GM10248 (cell line): ENCODE measurements at regions of chr15 and their contacts with region 1.

Region 1: DNA sequence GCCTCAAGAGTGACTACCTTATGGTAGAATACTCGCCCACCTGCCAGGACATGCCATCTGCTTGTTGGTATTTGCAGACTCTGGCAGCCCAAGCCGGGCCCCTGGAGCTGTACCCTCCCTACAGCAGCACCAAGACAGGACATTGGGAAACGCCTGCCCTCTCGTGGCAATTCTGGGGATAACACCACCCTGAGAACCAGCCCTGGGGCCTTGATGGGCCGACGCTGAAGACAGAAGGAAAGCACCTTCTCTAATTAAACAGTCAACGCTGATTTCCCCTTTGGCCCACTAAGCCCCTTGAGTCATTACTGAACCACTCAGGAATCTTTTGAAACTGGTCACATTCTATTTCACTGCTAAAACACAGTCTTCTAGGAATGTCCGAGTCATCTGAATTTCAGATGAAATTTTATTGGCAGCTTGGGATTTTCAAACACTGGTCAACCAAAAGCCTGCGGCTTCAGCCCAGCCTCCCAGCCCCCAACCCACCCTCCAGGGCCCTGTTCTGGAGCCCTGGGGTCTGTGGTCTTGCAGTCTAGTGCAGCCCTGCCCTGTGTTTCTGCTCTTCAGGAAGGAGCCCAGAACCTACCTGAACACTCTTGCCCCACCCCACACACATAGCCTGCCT is 91.3 kb downstream of the TMEM266 start:
- DNase-seq: peak; percentile 86
- CTCF ChIP-seq: peak; percentile 88

Region 2: DNA sequence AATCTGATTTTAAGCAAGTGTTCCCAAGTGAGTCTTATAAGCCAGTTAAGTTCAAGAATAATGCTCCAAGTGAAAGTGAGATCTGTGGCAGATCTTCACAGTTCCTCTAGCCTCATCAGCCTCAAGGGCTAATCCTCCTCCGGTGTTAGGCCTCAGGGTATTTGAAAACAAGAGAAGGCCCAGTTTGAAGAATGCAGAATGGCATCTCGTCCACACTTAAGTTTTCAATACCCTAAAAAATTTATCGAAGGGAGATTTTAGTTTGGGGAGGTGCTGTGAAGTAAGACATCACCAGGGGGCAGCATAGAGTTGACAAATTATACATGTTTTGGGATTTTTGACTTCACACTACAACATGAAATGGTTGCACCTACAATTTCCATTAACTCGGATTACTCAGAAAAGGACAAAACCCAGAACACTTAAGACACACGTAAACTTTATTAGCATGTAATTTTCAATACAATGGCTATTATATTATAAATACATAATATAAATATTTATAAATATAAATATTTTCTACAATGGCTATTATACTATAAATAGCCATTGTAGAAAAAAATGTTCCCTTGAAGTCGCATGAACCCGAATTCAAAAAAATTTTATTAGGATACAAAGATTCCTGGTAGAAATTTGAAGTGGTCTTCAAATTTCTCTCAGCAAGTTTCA is 93.6 kb before region 1 on chr15:
- CTCF ChIA-PET with region 1: interaction called, 292 read pairs
- POLR2A ChIA-PET with region 1: no interaction called
- DNase-seq: peak; percentile 47
- CTCF ChIP-seq: peak; percentile 55

Region 3: DNA sequence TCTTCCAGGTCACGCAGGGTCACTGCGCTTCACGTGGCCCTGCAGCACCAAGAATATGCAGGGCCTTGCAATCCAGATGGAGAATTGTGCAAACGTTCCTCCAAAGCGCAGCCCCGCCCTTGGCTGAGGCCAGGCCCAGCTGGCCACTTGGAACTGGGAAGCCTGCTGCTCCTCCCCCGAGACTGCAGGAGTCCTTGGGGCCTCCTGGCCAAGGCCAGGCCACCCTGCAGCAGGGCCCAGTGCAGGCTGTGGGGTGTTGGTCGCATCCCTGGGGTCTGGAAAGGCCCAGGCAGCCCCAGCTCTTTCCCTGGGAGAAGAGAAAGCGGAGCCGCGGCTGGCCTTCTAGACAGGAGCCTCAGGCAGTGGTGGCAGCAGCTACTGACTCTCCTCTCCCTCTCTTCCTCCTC is 12.4 kb after region 1 on chr15:
- CTCF ChIA-PET with region 1: interaction called, 73 read pairs
- POLR2A ChIA-PET with region 1: no interaction called
- DNase-seq: no peak
- CTCF ChIP-seq: no peak

Region 4: GRCh38 chr15:76178296-76179000 is 27.4 kb after region 1 on chr15:
- CTCF ChIA-PET with region 1: no interaction called
- POLR2A ChIA-PET with region 1: no interaction called
- DNase-seq: no peak
- CTCF ChIP-seq: no peak

Region 5: GRCh38 chr15:77243135-77243534 is 1092.0 kb after region 1 on chr15:
- CTCF ChIA-PET with region 1: no interaction called
- POLR2A ChIA-PET with region 1: no interaction called
- DNase-seq: no peak
- CTCF ChIP-seq: no peak